ENCODE measurements at regions of chr17 and their contacts with region 1.

Region 1: GRCh38 chr17:40098846-40099618 is 1.4 kb downstream of the NR1D1 start:
- DNase-seq: peak; percentile 99
- ATAC-seq: peak; percentile 60
- H3K4me3 ChIP-seq: peak overlapping the region; percentile 72 to 86 (median 79)
- H3K27ac ChIP-seq: peak overlapping the region; percentile 95
- H3K4me1 ChIP-seq: peaks cover 67% of the 10 kb centered on the region
- H3K27me3 ChIP-seq: no peaks in the 10 kb centered on the region; a peak in 1 of 5 replicates
- CTCF ChIP-seq: 0 out of 2 replicates have a peak, but pooled peaks have one; percentile 13
- EP300 ChIP-seq: peak; percentile 45 to 74; a peak in 3 of 4 replicates
- POLR2A ChIP-seq: peak; percentile 71 to 82
- RAD21 ChIP-seq: no peak; the same call in none of the 2 replicates

Region 2: DNA sequence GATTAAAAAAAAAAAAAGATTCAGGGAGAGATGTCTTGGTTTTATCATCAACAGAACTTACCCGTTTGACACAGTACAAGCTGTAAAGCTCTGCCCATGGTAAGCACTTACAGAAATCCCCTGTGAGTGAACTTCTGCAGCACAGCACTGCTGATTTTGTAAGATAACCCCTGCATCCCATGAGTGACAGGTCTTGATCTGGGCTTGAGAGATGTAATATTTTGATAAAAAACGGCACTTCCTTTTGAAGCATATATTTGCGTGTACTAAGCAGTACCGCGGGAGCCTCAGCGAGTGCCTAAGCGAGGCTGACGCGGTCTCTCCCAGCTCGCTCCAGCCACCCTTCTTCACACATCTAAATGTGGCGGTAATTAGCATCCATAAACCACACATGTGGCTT is 285.4 kb before region 1 on chr17:
- CTCF ChIA-PET with region 1: no interaction called
- POLR2A ChIA-PET with region 1: no interaction called
- in situ Hi-C with region 1: no loop called
- intact Hi-C with region 1: no loop called
- DNase-seq: no peak
- ATAC-seq: no peak
- H3K4me3 ChIP-seq: no peak overlapping the region
- H3K27ac ChIP-seq: no peak overlapping the region
- H3K4me1 ChIP-seq: no peaks in the 10 kb centered on the region
- H3K27me3 ChIP-seq: peaks cover 0 to 25% of the 10 kb centered on the region in 2 experiments; a peak in 3 of 5 replicates
- CTCF ChIP-seq: no peak
- EP300 ChIP-seq: no peak
- POLR2A ChIP-seq: no peak
- RAD21 ChIP-seq: no peak

Region 3: DNA sequence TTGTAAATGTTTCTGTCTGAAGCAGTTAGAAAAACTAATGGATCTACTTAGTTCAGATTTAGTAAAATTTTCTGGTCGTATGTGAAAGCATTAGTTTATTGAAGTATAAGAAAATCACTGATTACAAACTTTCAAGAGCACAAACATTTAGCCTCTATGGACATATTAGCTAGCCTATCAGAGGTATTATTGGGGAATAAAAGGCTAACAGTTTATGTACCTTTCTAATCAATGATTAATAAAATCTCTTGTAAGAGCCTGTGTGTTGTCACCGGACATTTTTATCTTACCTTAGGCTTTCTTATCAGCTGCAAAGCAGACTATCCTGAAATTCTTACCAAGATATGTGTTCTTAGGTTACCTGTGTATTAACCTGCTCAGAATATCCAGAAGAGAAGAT is 209.8 kb before region 1 on chr17:
- CTCF ChIA-PET with region 1: no interaction called
- POLR2A ChIA-PET with region 1: no interaction called
- in situ Hi-C with region 1: no loop called
- intact Hi-C with region 1: no loop called
- DNase-seq: no peak
- ATAC-seq: no peak
- H3K4me3 ChIP-seq: no peak overlapping the region
- H3K27ac ChIP-seq: no peak overlapping the region
- H3K4me1 ChIP-seq: no peaks in the 10 kb centered on the region
- H3K27me3 ChIP-seq: peaks cover 0 to 22% of the 10 kb centered on the region in 2 experiments; a peak in 2 of 5 replicates
- CTCF ChIP-seq: no peak
- EP300 ChIP-seq: no peak
- POLR2A ChIP-seq: no peak
- RAD21 ChIP-seq: no peak

Region 4: GRCh38 chr17:39927101-39927928 is 171.7 kb before region 1 on chr17 and contains the starts of genes LRRC3C and ORMDL3:
- CTCF ChIA-PET with region 1: no interaction called
- POLR2A ChIA-PET with region 1: interaction called, 3 read pairs
- in situ Hi-C with region 1: no loop called
- intact Hi-C with region 1: loop called (anchors 10 kb)
- DNase-seq: peak; percentile 94
- ATAC-seq: peak; percentile 71
- H3K4me3 ChIP-seq: peak within 1 kb of the TSS; percentile 72 to 96 (median 90)
- H3K27ac ChIP-seq: peak within 1 kb of the TSS; percentile 93
- H3K4me1 ChIP-seq: peaks cover 65% of the 10 kb centered on the region
- H3K27me3 ChIP-seq: no peaks in the 10 kb centered on the region; a peak in 1 of 5 replicates
- CTCF ChIP-seq: no peak; the same call in 1 of the 2 replicates
- EP300 ChIP-seq: peak in 1 of 2 experiments; percentile 37; a peak in 1 of 4 replicates
- POLR2A ChIP-seq: peak; percentile 46 to 86
- RAD21 ChIP-seq: peak; percentile 57; the same call in 1 of the 2 replicates
- total RNA-seq, gene LRRC3C: not detected in 2 replicates
- total RNA-seq, gene ORMDL3: 125 and 181 TPM in 2 replicates

Region 5: GRCh38 chr17:40023574-40024292 is 75.3 kb before region 1 on chr17:
- CTCF ChIA-PET with region 1: no interaction called
- POLR2A ChIA-PET with region 1: no interaction called
- in situ Hi-C with region 1: no loop called
- intact Hi-C with region 1: no loop called
- DNase-seq: no peak
- ATAC-seq: no peak
- H3K4me3 ChIP-seq: no peak overlapping the region
- H3K27ac ChIP-seq: no peak overlapping the region
- H3K4me1 ChIP-seq: no peaks in the 10 kb centered on the region
- H3K27me3 ChIP-seq: no peaks in the 10 kb centered on the region
- CTCF ChIP-seq: no peak
- EP300 ChIP-seq: no peak
- POLR2A ChIP-seq: no peak
- RAD21 ChIP-seq: no peak

Region 6: DNA sequence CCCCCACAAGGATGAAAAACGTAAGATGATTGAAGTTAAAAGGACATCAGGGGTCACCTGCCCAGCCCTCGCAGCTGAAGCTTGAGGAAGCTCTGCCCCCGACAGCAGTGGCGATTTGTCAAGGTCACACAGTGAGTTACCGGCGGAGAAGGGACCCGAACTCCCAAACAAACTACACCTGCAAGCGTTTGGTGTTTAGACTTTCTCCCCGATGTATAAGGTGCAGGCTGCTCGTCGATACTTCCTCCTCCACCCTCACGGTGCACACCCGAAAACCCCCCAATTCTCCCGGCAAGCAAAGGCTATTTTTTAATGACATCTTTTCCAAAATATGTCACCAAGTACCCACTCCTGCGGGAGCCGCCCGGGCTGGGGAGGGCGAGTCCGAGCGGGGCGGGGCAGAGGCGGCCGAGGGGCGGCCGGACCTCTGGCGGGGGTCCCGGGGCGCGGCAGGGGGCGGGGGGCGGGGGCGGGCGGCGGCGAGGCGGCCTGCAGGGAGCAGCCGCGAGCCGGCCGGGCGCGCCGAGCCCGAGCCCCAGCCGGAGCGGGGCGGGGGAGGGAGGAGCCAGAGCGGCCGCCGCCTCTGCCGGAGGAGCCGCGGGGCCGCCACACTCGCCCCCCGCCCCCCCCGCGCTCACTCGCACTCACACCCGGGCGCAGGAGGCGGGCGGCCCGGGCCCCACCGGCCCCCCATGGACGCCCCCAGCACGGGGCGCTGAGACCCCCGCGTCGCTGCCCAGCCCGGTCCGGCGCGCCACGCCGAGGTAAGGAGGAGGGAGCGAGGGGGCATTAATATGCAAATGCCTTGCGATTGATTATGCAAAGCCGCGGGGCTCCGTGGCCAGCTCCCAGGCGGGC is 36.5 kb before region 1 on chr17 and contains the start of gene THRA:
- CTCF ChIA-PET with region 1: no interaction called
- POLR2A ChIA-PET with region 1: interaction called, 26 read pairs
- in situ Hi-C with region 1: no loop called
- intact Hi-C with region 1: no loop called
- DNase-seq: no peak
- ATAC-seq: peak; percentile 73
- H3K4me3 ChIP-seq: peak within 1 kb of the TSS; percentile 92 to 99 (median 96)
- H3K27ac ChIP-seq: peak within 1 kb of the TSS; percentile 68
- H3K4me1 ChIP-seq: peaks cover 75% of the 10 kb centered on the region
- H3K27me3 ChIP-seq: peaks cover 4 to 28% of the 10 kb centered on the region in 2 experiments; a peak in 4 of 5 replicates
- CTCF ChIP-seq: peak; percentile 4
- EP300 ChIP-seq: no peak
- POLR2A ChIP-seq: no peak
- RAD21 ChIP-seq: peak; percentile 52; the same call in 1 of the 2 replicates
- total RNA-seq, gene THRA: 9.9 and 10.4 TPM in 2 replicates

Region 7: GRCh38 chr17:40075201-40075941 is 23.7 kb before region 1 on chr17:
- CTCF ChIA-PET with region 1: no interaction called
- POLR2A ChIA-PET with region 1: interaction called, 47 read pairs
- in situ Hi-C with region 1: no loop called
- intact Hi-C with region 1: no loop called
- DNase-seq: peak; percentile 71
- ATAC-seq: peak; percentile 76
- H3K4me3 ChIP-seq: no peak overlapping the region
- H3K27ac ChIP-seq: peak overlapping the region; percentile 16
- H3K4me1 ChIP-seq: peaks cover 49% of the 10 kb centered on the region
- H3K27me3 ChIP-seq: no peaks in the 10 kb centered on the region
- CTCF ChIP-seq: peak; percentile 97
- EP300 ChIP-seq: peak in 1 of 2 experiments; percentile 69; a peak in 1 of 4 replicates
- POLR2A ChIP-seq: no peak
- RAD21 ChIP-seq: peak; percentile 76

Region 8: DNA sequence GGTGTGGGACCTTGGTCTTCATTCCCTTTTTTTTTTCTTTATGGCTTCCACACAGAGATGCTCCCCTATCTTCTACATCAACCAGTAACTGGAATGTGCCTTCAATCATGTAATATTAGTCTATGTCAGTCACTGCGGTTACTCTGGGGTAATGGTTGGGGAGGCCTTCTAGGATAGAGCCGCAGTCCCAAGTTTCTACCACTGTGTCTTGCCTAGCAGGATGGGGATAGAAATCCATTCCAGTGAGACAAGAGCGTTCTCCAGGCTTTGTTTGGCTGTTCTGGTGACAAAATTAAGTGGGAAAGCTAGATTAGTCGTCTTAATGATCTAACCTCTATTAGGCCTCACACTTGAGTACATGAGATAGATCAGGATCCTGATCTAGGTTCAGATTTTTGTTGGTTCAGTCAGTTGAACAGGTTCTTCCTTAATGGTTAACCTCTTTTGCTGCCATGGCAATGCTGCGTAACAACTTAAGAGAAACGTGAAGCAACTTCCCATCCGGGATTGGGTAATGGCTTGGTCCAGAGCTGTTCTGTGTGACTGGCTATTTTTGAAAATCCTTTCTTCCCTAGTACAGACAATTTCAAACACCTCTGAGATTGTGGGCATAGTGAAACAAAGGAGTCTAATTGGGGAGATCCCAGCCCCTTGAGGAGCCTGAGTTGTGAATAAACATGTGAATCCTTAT is 31.5 kb after region 1 on chr17:
- CTCF ChIA-PET with region 1: no interaction called
- POLR2A ChIA-PET with region 1: interaction called, 134 read pairs
- in situ Hi-C with region 1: no loop called
- intact Hi-C with region 1: no loop called
- DNase-seq: no peak
- ATAC-seq: no peak
- H3K4me3 ChIP-seq: no peak overlapping the region
- H3K27ac ChIP-seq: peak overlapping the region; percentile 3
- H3K4me1 ChIP-seq: peaks cover 23% of the 10 kb centered on the region
- H3K27me3 ChIP-seq: no peaks in the 10 kb centered on the region
- CTCF ChIP-seq: no peak
- EP300 ChIP-seq: no peak
- POLR2A ChIP-seq: no peak
- RAD21 ChIP-seq: no peak

Measured in HepG2 (cell line).